ENCODE measurements at regions of chr3 and their contacts with region 1.

Region 1: GRCh38 chr3:31934018-31934417 is 47.0 kb downstream of the OSBPL10 start:
- DNase-seq: peak; percentile 66
- H3K4me3 ChIP-seq: peak overlapping the region; percentile 50
- H3K27ac ChIP-seq: peak overlapping the region; percentile 94
- H3K4me1 ChIP-seq: peaks cover 99% of the 10 kb centered on the region
- CTCF ChIP-seq: no peak

Region 2: GRCh38 chr3:31918179-31919168 is 15.5 kb before region 1 on chr3:
- CTCF ChIA-PET with region 1: no interaction called
- POLR2A ChIA-PET with region 1: interaction called, 12 read pairs
- intact Hi-C with region 1: no loop called
- DNase-seq: peak; percentile 65
- H3K4me3 ChIP-seq: peak overlapping the region; percentile 64
- H3K27ac ChIP-seq: peak overlapping the region; percentile 100
- H3K4me1 ChIP-seq: peaks cover 99% of the 10 kb centered on the region
- CTCF ChIP-seq: no peak

Region 3: DNA sequence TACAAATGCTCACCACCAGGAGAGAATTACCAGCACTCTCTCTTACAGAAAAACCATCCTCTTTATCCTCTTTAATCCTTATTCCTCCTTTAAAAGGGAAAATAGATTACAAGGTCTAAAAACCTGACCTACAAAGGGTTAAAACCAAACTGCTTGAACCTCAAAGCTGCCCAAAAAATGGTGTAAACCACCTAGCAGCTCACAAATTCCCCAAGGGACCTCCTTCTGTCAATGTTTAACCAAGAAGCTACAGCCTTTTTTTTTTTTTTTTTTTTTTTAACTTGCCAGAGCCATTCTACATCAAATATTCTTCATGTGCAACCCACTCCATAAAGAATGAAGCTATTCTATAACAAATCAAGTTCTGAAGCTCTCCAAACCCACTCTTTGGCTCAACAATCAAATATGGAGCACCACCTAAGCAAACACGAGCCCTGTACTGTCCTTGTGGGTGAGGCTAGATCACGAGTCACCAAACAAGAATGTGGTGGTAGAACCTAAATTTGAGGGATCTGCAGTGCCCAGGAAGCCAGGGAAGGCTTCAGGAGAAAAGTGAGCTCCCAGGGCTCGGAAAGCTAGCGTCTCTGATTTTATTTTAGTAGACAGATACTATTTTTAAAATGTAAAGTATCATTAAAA is 26.9 kb after region 1 on chr3:
- CTCF ChIA-PET with region 1: interaction called, 3 read pairs
- POLR2A ChIA-PET with region 1: interaction called, 30 read pairs
- intact Hi-C with region 1: no loop called
- DNase-seq: peak; percentile 85
- H3K4me3 ChIP-seq: peak overlapping the region; percentile 65
- H3K27ac ChIP-seq: peak overlapping the region; percentile 91
- H3K4me1 ChIP-seq: peaks cover 82% of the 10 kb centered on the region
- CTCF ChIP-seq: no peak

Region 4: GRCh38 chr3:31968927-31969418 is 35.0 kb after region 1 on chr3:
- CTCF ChIA-PET with region 1: no interaction called
- POLR2A ChIA-PET with region 1: interaction called, 24 read pairs
- intact Hi-C with region 1: no loop called
- DNase-seq: no peak
- H3K4me3 ChIP-seq: peak overlapping the region; percentile 91
- H3K27ac ChIP-seq: peak overlapping the region; percentile 88
- H3K4me1 ChIP-seq: peaks cover 88% of the 10 kb centered on the region
- CTCF ChIP-seq: no peak

Region 5: GRCh38 chr3:32004113-32004765 is 70.2 kb after region 1 on chr3:
- CTCF ChIA-PET with region 1: no interaction called
- POLR2A ChIA-PET with region 1: no interaction called
- intact Hi-C with region 1: no loop called
- DNase-seq: no peak
- H3K4me3 ChIP-seq: no peak overlapping the region
- H3K27ac ChIP-seq: no peak overlapping the region
- H3K4me1 ChIP-seq: peaks cover 48% of the 10 kb centered on the region
- CTCF ChIP-seq: 0 out of 2 replicates have a peak, but pooled peaks have one; percentile 15